AG04449 (cell line): ENCODE measurements at regions of chr5 and their contacts with region 1.

Region 1: GRCh38 chr5:138065102-138065501 is 18.7 kb upstream of the WNT8A start:
- DNase-seq: no peak
- H3K4me3 ChIP-seq: no peak overlapping the region
- CTCF ChIP-seq: peak; percentile 22

Region 2: GRCh38 chr5:137743031-137743640 is 322.0 kb before region 1 on chr5:
- CTCF ChIA-PET with region 1: interaction called, 10 read pairs
- POLR2A ChIA-PET with region 1: no interaction called
- DNase-seq: no peak
- H3K4me3 ChIP-seq: no peak overlapping the region
- CTCF ChIP-seq: peak; percentile 56

Region 3: GRCh38 chr5:138035605-138036537 is 29.2 kb before region 1 on chr5:
- CTCF ChIA-PET with region 1: interaction called, 444 read pairs
- POLR2A ChIA-PET with region 1: interaction called, 3 read pairs
- DNase-seq: peak; percentile 59
- H3K4me3 ChIP-seq: no peak overlapping the region
- CTCF ChIP-seq: peak; percentile 61

Region 4: DNA sequence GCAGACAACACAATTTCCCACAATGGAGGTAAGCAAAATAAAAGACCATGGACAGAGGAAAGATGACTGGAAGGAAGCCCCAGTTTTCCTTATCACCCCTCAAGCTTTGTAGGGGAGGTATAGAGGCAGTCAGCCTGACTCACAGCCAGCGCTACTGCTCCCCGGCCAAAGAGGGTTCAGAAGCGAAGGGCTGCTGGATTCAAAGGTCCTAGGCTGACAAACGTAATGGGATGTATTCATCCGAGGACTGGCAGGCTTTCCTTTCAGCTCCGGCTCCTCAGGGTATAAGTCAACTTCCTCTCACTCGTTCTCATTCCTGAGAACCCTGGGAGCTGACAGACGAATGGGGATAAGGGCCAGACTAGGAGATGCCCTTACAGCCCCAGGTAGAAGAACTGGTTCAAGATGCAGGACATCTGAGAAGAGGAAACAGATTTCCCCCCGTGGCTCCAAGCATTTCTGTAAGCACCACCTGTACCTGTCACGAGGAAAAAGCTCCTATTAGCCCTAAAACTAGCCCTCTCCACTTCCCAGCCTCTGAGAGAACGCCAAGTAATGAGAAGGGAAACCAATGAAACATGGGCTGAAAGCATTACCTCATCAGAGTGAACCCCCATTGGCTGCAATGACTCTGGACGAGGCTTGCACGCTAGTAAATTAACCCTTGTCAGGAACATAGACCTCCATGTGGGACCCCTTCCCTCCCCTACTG is 10.1 kb before region 1 on chr5:
- CTCF ChIA-PET with region 1: interaction called, 444 read pairs
- POLR2A ChIA-PET with region 1: no interaction called
- DNase-seq: no peak
- H3K4me3 ChIP-seq: no peak overlapping the region
- CTCF ChIP-seq: no peak

Region 5: GRCh38 chr5:138093036-138093435 is 27.9 kb after region 1 on chr5:
- CTCF ChIA-PET with region 1: interaction called, 10 read pairs
- POLR2A ChIA-PET with region 1: no interaction called
- DNase-seq: no peak
- H3K4me3 ChIP-seq: no peak overlapping the region
- CTCF ChIP-seq: no peak

Region 6: GRCh38 chr5:138110266-138110963 is 45.3 kb after region 1 on chr5:
- CTCF ChIA-PET with region 1: interaction called, 10 read pairs
- POLR2A ChIA-PET with region 1: no interaction called
- DNase-seq: no peak
- H3K4me3 ChIP-seq: no peak overlapping the region
- CTCF ChIP-seq: no peak

Region 7: GRCh38 chr5:138128334-138128733 is 63.2 kb after region 1 on chr5:
- CTCF ChIA-PET with region 1: interaction called, 19 read pairs
- POLR2A ChIA-PET with region 1: no interaction called
- DNase-seq: no peak
- H3K4me3 ChIP-seq: no peak overlapping the region
- CTCF ChIP-seq: no peak